Adrenal gland (tissue), 19 donors: ENCODE measurements at regions of chr14 and their contacts with region 1.

Region 1: GRCh38 chr14:60184146-60184904 is 19.1 kb upstream of the DHRS7 start:
- DNase-seq: peak in 3 of 7 donors; percentile 20 to 39 (median 29)
- H3K4me3 ChIP-seq: peak overlapping the region in 2 of 4 donors; percentile 16 to 50
- H3K27ac ChIP-seq: peak overlapping the region in 1 of 5 donors; percentile 39
- H3K4me1 ChIP-seq: peaks cover 0 to 7% of the 10 kb centered on the region in 2 donors
- H3K27me3 ChIP-seq: no peaks in the 10 kb centered on the region
- CTCF ChIP-seq: peak; percentile 65 to 96 (median 86)
- POLR2A ChIP-seq: no peak

Region 2: DNA sequence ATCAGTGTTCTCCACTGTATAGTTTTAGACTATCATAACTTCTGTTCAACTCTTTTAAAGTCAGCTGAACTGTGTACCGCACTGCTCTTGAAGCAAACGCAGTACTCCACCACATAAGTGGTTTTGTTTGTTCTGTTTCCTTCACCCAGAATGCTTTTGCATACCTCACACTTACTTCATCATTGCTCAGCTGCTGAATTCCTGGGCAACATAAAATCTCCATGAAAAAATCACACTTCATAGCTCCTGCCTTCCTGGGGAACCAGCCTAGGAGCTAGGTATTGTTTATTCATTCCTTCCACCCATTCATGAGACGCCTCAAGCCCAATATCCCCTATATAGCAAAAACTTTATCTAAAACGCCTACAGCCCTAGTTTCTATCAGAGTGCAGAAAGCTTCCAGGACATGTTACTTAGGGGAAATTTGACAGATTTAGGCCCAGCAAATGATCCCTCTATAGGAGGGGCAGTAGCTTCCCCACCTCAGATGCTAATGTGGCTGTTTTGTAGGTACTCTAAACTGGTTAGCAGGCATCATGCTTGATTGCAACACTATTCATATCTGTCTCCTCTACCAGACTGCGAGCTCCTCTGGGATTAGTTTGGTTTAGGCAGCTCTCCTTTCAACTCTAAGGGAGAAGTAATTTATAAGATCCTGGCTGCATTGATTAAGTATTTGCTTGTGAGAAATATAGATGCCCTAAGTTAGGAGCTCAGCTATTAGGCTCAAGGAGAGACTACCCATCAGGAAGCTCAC is 219.9 kb before region 1 on chr14:
- intact Hi-C with region 1: loop called (anchors 5 to 10 kb)
- DNase-seq: no peak
- H3K4me3 ChIP-seq: no peak overlapping the region
- H3K27ac ChIP-seq: no peak overlapping the region
- H3K4me1 ChIP-seq: no peaks in the 10 kb centered on the region
- H3K27me3 ChIP-seq: no peaks in the 10 kb centered on the region
- CTCF ChIP-seq: no peak
- POLR2A ChIP-seq: no peak

Region 3: DNA sequence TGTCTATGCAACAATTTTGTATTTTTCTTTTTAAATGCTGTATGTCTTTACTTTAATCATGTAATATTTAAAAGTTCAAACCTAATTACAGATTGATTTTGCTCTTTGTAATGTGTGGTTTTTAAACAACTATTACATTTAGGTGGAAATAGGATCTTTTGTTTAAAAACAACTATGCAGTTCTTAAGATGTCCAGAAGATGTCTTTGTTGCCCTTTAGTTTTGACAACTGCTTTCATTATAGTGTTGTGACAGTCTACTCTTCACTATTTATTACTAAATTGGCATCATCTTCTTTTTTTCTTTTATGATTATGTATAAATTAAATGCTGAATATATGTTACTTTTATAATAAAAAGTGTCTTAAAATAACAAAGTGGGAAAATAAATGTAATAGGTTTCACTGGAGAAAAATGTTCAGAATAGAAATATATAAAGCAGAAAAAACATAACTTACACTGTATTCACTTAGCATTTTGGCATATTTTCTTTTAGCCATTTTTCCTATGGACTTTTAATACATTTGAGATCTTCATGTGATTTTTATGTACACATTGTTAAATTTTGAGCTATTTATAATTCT is 119.7 kb before region 1 on chr14:
- intact Hi-C with region 1: loop called in 1 of 2 experiments (anchors 5 kb)
- DNase-seq: no peak
- H3K4me3 ChIP-seq: no peak overlapping the region
- H3K27ac ChIP-seq: no peak overlapping the region
- H3K4me1 ChIP-seq: no peaks in the 10 kb centered on the region
- H3K27me3 ChIP-seq: no peaks in the 10 kb centered on the region
- CTCF ChIP-seq: peak; percentile 52 to 83 (median 68)
- POLR2A ChIP-seq: no peak